CD8-positive, alpha-beta T cell (primary cell): ENCODE measurements at regions of chr13 and their contacts with region 1.

Region 1: DNA sequence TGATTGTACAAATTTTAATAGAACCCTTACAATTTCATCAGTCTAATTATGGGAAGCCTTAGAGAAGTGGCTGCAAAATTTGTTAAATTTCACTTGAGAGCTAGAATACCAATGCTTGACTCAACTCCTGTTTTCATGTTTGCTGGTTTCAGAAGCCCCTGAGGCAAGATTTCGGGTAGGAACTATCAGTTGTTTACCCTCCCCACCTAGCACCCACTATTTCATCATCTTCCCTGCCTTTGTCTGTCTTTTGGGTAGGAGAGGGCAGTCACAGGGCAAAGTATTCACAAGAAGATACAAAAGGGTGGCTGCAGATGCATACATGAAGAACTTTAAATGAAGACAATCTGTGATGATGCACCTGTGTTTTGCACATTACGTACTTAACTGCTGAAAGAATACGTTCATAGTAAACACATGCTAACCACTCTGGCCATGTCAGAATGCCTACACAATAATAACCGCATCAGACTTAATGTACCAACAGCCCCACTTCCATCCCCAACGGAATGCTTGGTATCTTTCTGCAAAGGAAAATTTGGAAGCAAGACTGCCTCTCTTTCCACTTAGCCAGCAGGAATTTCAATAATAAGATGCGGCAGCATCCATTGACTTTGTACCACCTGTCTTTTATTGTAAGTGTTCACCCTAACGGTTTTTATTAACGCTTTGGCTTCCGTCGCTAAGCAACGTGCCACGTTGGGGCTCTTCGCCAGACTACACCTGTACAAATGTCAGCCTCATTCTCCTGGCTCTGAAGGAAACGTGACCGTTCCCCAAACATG is 30.4 kb downstream of the TPT1 start:
- DNase-seq: no peak
- ATAC-seq: peak; percentile 15
- H3K4me3 ChIP-seq: peak overlapping the region; percentile 53 to 59
- H3K4me3 Mint-ChIP-seq: peak overlapping the region; percentile 85
- H3K27ac ChIP-seq: no peak overlapping the region
- H3K27ac Mint-ChIP-seq: no peak overlapping the region
- H3K4me1 ChIP-seq: peaks cover 11% of the 10 kb centered on the region
- H3K4me1 Mint-ChIP-seq: peaks cover 21% of the 10 kb centered on the region
- H3K27me3 ChIP-seq: peaks cover 0 to 5% of the 10 kb centered on the region in 2 experiments
- H3K27me3 Mint-ChIP-seq: peaks cover 4% of the 10 kb centered on the region
- CTCF ChIP-seq: no peak

Region 2: GRCh38 chr13:43905435-43906031 is 1405.0 kb before region 1 on chr13:
- CTCF ChIA-PET with region 1: no interaction called
- POLR2A ChIA-PET with region 1: no interaction called
- intact Hi-C with region 1: loop called in 1 of 2 experiments (anchors 5 kb)
- DNase-seq: peak in 4 of 9 experiments; percentile 15 to 74 (median 42)
- ATAC-seq: peak; percentile 79
- H3K4me3 ChIP-seq: no peak overlapping the region
- H3K4me3 Mint-ChIP-seq: no peak overlapping the region
- H3K27ac ChIP-seq: no peak overlapping the region
- H3K27ac Mint-ChIP-seq: no peak overlapping the region
- H3K4me1 ChIP-seq: no peaks in the 10 kb centered on the region
- H3K4me1 Mint-ChIP-seq: no peaks in the 10 kb centered on the region
- H3K27me3 ChIP-seq: no peaks in the 10 kb centered on the region
- H3K27me3 Mint-ChIP-seq: peaks cover 14% of the 10 kb centered on the region
- CTCF ChIP-seq: peak; percentile 82

Region 3: DNA sequence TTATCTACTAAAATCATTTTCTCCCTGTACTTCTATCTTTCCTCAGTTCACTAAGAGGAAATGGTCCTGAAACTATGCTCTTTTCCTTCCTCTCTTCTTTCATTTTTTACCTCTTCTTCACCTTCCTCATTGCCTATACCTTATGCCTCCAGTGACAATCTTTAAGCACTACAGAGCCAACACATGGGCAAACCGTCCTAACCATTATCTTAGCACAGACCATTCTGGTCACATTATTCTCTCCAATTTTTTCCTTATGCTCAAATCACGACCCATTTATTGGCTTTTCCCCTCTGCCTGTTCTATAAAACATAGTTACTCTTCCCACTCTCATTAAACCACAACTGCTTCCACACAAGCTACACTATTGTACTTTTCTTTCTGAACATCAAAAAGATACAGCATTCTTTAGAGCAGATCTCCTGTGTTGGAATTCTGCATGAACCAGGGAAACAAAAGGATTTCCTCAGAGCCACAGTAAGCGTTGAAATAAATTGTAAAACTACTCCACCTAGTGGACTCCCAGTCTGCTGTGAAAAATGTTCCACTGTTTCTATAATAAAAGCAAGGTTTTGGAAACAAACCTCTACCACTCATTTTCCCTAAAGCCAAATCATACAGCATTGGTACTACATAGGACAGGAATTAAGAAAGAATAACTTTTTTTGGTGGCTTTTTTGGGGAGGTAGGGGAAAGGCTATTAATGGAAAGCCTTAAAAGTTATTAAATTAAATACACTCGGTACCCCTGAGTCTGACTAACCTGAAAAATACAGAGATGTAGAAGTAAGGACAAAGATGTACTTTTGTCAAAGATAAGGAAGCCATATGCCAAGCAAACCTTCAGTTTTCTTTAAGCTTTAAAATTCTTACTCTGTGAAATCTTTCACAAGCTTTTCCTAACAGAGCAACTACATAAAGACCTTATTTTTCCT is 340.7 kb before region 1 on chr13:
- CTCF ChIA-PET with region 1: interaction called, 4 read pairs
- POLR2A ChIA-PET with region 1: no interaction called
- intact Hi-C with region 1: loop called in 1 of 2 experiments (anchors 1 kb)
- DNase-seq: peak in 2 of 9 experiments; percentile 32 to 50
- ATAC-seq: no peak
- H3K4me3 ChIP-seq: no peak overlapping the region
- H3K4me3 Mint-ChIP-seq: no peak overlapping the region
- H3K27ac ChIP-seq: no peak overlapping the region
- H3K27ac Mint-ChIP-seq: no peak overlapping the region
- H3K4me1 ChIP-seq: no peaks in the 10 kb centered on the region
- H3K4me1 Mint-ChIP-seq: no peaks in the 10 kb centered on the region
- H3K27me3 ChIP-seq: no peaks in the 10 kb centered on the region
- H3K27me3 Mint-ChIP-seq: no peaks in the 10 kb centered on the region
- CTCF ChIP-seq: peak; percentile 67

Region 4: DNA sequence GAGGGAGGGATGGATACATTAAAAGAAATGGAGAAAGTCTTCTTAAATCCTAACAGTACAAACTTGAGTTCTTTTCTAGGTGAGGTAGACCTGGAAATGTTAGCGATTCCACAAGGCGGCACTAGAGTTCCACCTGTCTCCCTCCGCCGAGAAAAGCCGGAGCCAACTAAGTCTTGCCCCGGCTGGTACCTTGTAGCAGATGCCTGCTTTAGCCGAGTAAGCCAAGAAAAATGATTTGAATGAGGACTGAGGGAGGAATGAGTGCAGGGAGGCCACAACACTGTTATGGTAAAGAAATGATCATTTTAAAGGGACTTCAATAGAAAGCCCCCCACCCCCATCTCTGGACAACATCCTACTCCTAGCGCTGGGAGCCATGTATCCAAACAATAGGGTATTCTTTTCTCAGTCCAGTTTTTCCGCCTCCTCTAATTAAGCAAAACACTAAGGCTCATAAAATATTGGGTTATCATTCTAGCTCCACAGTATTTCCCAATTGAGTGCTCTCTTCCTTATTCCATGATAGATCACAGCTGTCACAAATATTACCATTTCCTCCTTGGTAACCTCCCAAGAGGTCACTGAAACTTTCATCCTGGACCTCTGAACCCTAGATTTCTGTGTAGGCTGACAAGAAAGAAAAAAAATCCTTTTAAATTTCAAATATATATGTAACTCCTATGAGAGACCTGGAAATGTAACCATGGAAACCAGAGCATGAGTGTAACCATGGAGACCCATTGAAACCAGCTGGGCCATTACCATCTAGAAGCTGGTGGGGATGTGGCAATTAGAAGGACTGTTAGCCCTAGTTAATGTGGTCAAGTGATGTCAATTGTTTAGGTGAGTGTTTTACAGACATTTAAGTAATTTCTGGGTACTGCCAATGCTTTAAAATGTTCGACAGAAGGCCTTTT is 262.9 kb before region 1 on chr13:
- CTCF ChIA-PET with region 1: interaction called, 104 read pairs
- POLR2A ChIA-PET with region 1: no interaction called
- intact Hi-C with region 1: loop called (anchors 1 kb)
- DNase-seq: peak; percentile 56 to 85 (median 76)
- ATAC-seq: peak; percentile 97
- H3K4me3 ChIP-seq: peak overlapping the region in 1 of 2 experiments; percentile 31
- H3K4me3 Mint-ChIP-seq: peak overlapping the region; percentile 54
- H3K27ac ChIP-seq: no peak overlapping the region
- H3K27ac Mint-ChIP-seq: no peak overlapping the region
- H3K4me1 ChIP-seq: no peaks in the 10 kb centered on the region
- H3K4me1 Mint-ChIP-seq: peaks cover 7% of the 10 kb centered on the region
- H3K27me3 ChIP-seq: peaks cover 0 to 5% of the 10 kb centered on the region in 2 experiments
- H3K27me3 Mint-ChIP-seq: peaks cover 10% of the 10 kb centered on the region
- CTCF ChIP-seq: peak; percentile 81

Region 5: GRCh38 chr13:45297456-45298205 is 12.9 kb before region 1 on chr13:
- CTCF ChIA-PET with region 1: interaction called, 28 read pairs
- POLR2A ChIA-PET with region 1: no interaction called
- intact Hi-C with region 1: no loop called
- DNase-seq: peak in 3 of 9 experiments; percentile 13 to 60 (median 32)
- ATAC-seq: peak; percentile 81
- H3K4me3 ChIP-seq: no peak overlapping the region
- H3K4me3 Mint-ChIP-seq: peak overlapping the region; percentile 9
- H3K27ac ChIP-seq: peak overlapping the region in 1 of 2 experiments; percentile 55
- H3K27ac Mint-ChIP-seq: peak overlapping the region; percentile 81
- H3K4me1 ChIP-seq: peaks cover 29% of the 10 kb centered on the region
- H3K4me1 Mint-ChIP-seq: peaks cover 41% of the 10 kb centered on the region
- H3K27me3 ChIP-seq: no peaks in the 10 kb centered on the region
- H3K27me3 Mint-ChIP-seq: no peaks in the 10 kb centered on the region
- CTCF ChIP-seq: no peak

Region 6: GRCh38 chr13:45332036-45332830 is 21.7 kb after region 1 on chr13:
- CTCF ChIA-PET with region 1: interaction called, 3 read pairs
- POLR2A ChIA-PET with region 1: no interaction called
- intact Hi-C with region 1: loop called in 1 of 2 experiments (anchors 1 kb)
- DNase-seq: no peak
- ATAC-seq: no peak
- H3K4me3 ChIP-seq: no peak overlapping the region
- H3K4me3 Mint-ChIP-seq: no peak overlapping the region
- H3K27ac ChIP-seq: no peak overlapping the region
- H3K27ac Mint-ChIP-seq: peak overlapping the region; percentile 67
- H3K4me1 ChIP-seq: peaks cover 74% of the 10 kb centered on the region
- H3K4me1 Mint-ChIP-seq: peaks cover 89% of the 10 kb centered on the region
- H3K27me3 ChIP-seq: no peaks in the 10 kb centered on the region
- H3K27me3 Mint-ChIP-seq: no peaks in the 10 kb centered on the region
- CTCF ChIP-seq: no peak

Region 7: DNA sequence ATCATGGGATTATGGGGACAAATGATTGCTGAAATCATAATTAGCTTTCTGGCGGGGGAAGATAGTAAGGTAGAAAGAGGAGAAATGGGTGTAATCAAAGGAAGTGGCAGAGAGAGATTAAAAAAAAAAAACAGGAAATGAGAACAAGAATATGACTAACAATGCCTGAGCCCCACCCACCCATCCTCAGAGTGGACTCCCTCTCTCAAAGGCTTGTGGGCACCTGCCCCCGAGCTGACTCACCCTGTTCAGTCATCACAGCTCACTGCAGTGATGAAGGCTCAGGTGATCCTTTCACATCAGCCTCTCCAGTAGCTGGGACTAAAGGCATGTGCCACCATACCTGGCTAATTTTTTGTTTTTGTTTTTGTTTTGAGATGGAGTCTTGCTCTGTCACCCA is 56.8 kb after region 1 on chr13:
- CTCF ChIA-PET with region 1: no interaction called
- POLR2A ChIA-PET with region 1: no interaction called
- intact Hi-C with region 1: loop called in 1 of 2 experiments (anchors 2 kb)
- DNase-seq: peak; percentile 71 to 98 (median 89)
- ATAC-seq: peak; percentile 98
- H3K4me3 ChIP-seq: no peak overlapping the region
- H3K4me3 Mint-ChIP-seq: peak overlapping the region; percentile 40
- H3K27ac ChIP-seq: peak overlapping the region in 1 of 2 experiments; percentile 66
- H3K27ac Mint-ChIP-seq: peak overlapping the region; percentile 89
- H3K4me1 ChIP-seq: peaks cover 27% of the 10 kb centered on the region
- H3K4me1 Mint-ChIP-seq: peaks cover 49% of the 10 kb centered on the region
- H3K27me3 ChIP-seq: no peaks in the 10 kb centered on the region
- H3K27me3 Mint-ChIP-seq: no peaks in the 10 kb centered on the region
- CTCF ChIP-seq: no peak